AG04450 (cell line): ENCODE measurements at regions of chr7 and their contacts with region 1.

Region 1: GRCh38 chr7:12638851-12639467 is 48.5 kb upstream of the ARL4A start:
- DNase-seq: no peak
- H3K4me3 ChIP-seq: no peak overlapping the region
- H3K27ac ChIP-seq: no peak overlapping the region
- H3K27me3 ChIP-seq: no peaks in the 10 kb centered on the region
- CTCF ChIP-seq: peak; percentile 62

Region 2: DNA sequence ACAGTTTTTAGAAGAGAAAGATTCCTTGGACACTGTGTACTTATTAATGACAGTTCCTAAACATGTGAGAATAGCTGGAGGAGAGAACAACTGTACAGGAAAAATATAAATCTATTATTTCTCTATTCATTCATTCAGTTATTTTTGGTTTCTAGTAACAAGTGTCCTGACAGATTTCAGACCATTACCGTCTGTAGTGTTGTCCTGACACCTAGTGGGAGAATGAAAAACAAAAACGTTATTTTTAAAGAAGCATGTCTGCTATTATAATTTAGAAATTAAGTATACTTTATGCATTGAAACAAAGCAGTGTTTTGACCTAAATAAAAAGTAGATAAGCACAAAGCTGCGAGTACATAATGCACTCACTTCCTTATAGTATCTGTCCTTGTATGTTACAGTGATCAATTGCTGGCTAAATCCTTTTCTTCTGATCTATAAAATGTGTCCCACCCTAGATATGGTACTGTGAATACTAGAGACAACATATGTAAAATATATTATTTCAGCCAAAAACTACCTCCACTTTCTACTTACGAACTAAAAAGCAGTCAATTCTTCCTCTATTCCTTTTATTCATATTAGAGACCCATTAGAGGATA is 624.1 kb after region 1 on chr7:
- CTCF ChIA-PET with region 1: interaction called, 57 read pairs
- POLR2A ChIA-PET with region 1: no interaction called
- DNase-seq: peak; percentile 24
- H3K4me3 ChIP-seq: no peak overlapping the region
- H3K27ac ChIP-seq: no peak overlapping the region
- H3K27me3 ChIP-seq: no peaks in the 10 kb centered on the region
- CTCF ChIP-seq: peak; percentile 61